ENCODE measurements at regions of chr7 and their contacts with region 1.

Region 1: GRCh38 chr7:121107923-121108498 is 119.5 kb downstream of the CPED1 start:
- DNase-seq: peak in 3 of 14 experiments; percentile 67 to 69 (median 67)
- ATAC-seq: peak; percentile 68
- H3K4me3 ChIP-seq: no peak overlapping the region
- H3K4me3 Mint-ChIP-seq: no peak overlapping the region
- H3K27ac ChIP-seq: no peak overlapping the region
- H3K27ac Mint-ChIP-seq: no peak overlapping the region
- H3K4me1 ChIP-seq: no peaks in the 10 kb centered on the region
- H3K4me1 Mint-ChIP-seq: no peaks in the 10 kb centered on the region
- H3K27me3 ChIP-seq: no peaks in the 10 kb centered on the region
- H3K27me3 Mint-ChIP-seq: peaks cover 13% of the 10 kb centered on the region
- CTCF ChIP-seq: peak; percentile 94

Region 2: GRCh38 chr7:120792091-120792860 is 315.7 kb before region 1 on chr7:
- CTCF ChIA-PET with region 1: no interaction called
- POLR2A ChIA-PET with region 1: no interaction called
- intact Hi-C with region 1: loop called (anchors 1 to 5 kb)
- DNase-seq: peak; percentile 22 to 69 (median 42)
- ATAC-seq: no peak
- H3K4me3 ChIP-seq: no peak overlapping the region
- H3K4me3 Mint-ChIP-seq: no peak overlapping the region
- H3K27ac ChIP-seq: no peak overlapping the region
- H3K27ac Mint-ChIP-seq: no peak overlapping the region
- H3K4me1 ChIP-seq: no peaks in the 10 kb centered on the region
- H3K4me1 Mint-ChIP-seq: no peaks in the 10 kb centered on the region
- H3K27me3 ChIP-seq: peaks cover 3 to 4% of the 10 kb centered on the region in 2 experiments
- H3K27me3 Mint-ChIP-seq: peaks cover 5% of the 10 kb centered on the region
- CTCF ChIP-seq: peak; percentile 80

Region 3: GRCh38 chr7:120805636-120806388 is 302.2 kb before region 1 on chr7:
- CTCF ChIA-PET with region 1: interaction called, 3 read pairs
- POLR2A ChIA-PET with region 1: no interaction called
- intact Hi-C with region 1: loop called (anchors 1 to 2 kb)
- DNase-seq: peak in 13 of 14 experiments; percentile 9 to 72 (median 26)
- ATAC-seq: peak; percentile 41
- H3K4me3 ChIP-seq: no peak overlapping the region
- H3K4me3 Mint-ChIP-seq: no peak overlapping the region
- H3K27ac ChIP-seq: no peak overlapping the region
- H3K27ac Mint-ChIP-seq: no peak overlapping the region
- H3K4me1 ChIP-seq: no peaks in the 10 kb centered on the region
- H3K4me1 Mint-ChIP-seq: no peaks in the 10 kb centered on the region
- H3K27me3 ChIP-seq: peaks cover 0 to 6% of the 10 kb centered on the region in 2 experiments
- H3K27me3 Mint-ChIP-seq: peaks cover 19% of the 10 kb centered on the region
- CTCF ChIP-seq: peak; percentile 84

Region 4: DNA sequence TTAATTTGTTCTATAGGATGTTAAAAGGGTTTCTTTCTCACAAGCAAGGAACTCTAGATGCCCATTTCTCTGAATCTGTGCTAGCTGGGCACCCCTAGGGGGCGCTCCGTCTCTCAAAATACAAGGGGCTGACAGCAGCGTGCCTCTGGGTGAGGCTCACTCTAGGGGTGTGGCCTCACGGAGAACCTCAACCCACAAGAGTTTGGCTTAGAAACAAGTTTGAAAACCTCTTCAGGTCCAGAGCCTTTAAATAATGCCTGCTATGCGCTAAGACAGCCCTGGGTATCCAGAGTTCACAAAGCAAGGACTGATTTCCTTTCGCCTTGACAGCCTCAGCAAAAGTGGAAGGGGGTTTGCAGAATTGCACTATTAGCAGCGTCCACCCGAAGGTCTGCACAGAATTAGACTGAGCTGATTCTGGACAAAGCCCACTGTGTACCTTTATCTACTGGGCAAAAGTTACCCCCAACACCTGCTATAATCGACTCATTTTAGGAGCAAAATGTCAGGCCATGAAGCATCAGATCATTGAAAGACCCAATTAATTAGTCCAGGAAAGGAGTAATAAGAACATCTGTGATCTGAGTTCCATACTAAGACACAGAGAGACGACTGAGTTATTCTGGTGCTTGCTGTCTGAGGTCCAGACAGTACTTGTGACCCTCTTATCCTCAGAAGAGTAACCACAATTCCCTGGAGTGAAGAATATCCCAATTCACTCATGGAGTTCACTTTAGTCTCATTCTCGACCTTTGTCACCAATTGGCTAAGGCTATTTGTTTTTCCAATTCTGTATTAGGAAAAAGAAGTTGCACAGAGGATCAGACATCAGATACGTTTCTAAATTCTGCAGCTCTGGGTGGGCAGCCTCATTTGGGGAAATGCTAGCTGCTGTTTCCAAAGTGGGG is 120.1 kb before region 1 on chr7:
- CTCF ChIA-PET with region 1: interaction called, 11 read pairs
- POLR2A ChIA-PET with region 1: no interaction called
- intact Hi-C with region 1: loop called (anchors 1 kb)
- DNase-seq: peak; percentile 77 to 94 (median 83)
- ATAC-seq: peak; percentile 100
- H3K4me3 ChIP-seq: peak overlapping the region; percentile 10
- H3K4me3 Mint-ChIP-seq: peak overlapping the region; percentile 44
- H3K27ac ChIP-seq: no peak overlapping the region
- H3K27ac Mint-ChIP-seq: no peak overlapping the region
- H3K4me1 ChIP-seq: peaks cover 20% of the 10 kb centered on the region
- H3K4me1 Mint-ChIP-seq: peaks cover 26% of the 10 kb centered on the region
- H3K27me3 ChIP-seq: peaks cover 25 to 52% of the 10 kb centered on the region in 2 experiments
- H3K27me3 Mint-ChIP-seq: peaks cover 75% of the 10 kb centered on the region
- CTCF ChIP-seq: peak; percentile 95

Measured in CD4-positive, alpha-beta T cell (primary cell).